A549 (cell line): ENCODE measurements at regions of chr19 and their contacts with region 1.

Region 1: GRCh38 chr19:8654591-8655339 is 24.3 kb downstream of the NFILZ start:
- DNase-seq: peak; percentile 59 to 69
- ATAC-seq: peak; percentile 68 to 86
- H3K4me3 ChIP-seq: no peak overlapping the region
- H3K27ac ChIP-seq: peak overlapping the region; percentile 73 to 83
- H3K4me1 ChIP-seq: 0 out of 3 replicates have a peak, but pooled peaks cover 3% of the 10 kb centered on the region
- CTCF ChIP-seq: peak; percentile 80
- EP300 ChIP-seq: no peak
- POLR2A ChIP-seq: no peak
- RAD21 ChIP-seq: peak; percentile 80 to 84

Region 2: DNA sequence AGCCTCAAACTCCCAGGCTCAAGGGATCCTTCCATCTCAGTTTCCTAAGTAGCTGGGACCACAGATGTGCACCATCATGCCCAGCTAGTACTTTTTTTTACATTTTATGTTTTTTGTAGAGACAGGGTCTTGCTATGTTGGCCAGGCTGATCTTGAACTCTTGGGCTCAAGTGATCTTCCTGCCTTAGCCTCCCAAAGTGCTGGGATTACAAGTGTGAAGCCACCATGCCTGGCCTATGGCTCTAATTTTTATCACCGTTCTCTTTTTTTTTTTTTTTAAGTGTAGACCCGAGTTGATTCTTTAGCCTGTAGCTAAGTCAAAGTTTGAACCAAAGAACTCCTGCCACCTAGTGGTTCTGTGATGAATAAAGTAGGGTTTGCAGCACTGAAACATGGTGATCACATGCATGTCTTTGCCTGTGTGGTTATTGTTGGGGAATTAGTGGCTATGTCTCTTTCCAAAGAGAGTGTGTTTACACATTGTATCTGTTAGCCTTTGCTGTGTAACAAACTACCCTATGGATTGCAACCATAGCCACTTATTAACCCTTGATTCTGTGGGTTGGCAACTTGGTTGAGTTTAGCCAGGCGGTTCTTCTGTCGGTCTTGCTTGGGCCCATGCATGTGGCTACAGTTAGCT is 12.7 kb before region 1 on chr19:
- CTCF ChIA-PET with region 1: interaction called, 10 read pairs
- POLR2A ChIA-PET with region 1: no interaction called
- DNase-seq: peak; percentile 38 to 68
- ATAC-seq: no peak
- H3K4me3 ChIP-seq: no peak overlapping the region
- H3K27ac ChIP-seq: peak overlapping the region; percentile 94 to 98
- H3K4me1 ChIP-seq: peaks cover 36% of the 10 kb centered on the region
- CTCF ChIP-seq: 0 out of 3 replicates have a peak, but pooled peaks have one; percentile 14
- EP300 ChIP-seq: no peak
- POLR2A ChIP-seq: no peak
- RAD21 ChIP-seq: peak in 1 of 2 experiments; percentile 58; a peak in 3 of 5 replicates

Region 3: GRCh38 chr19:8697671-8698432 is 43.1 kb after region 1 on chr19:
- CTCF ChIA-PET with region 1: interaction called, 26 read pairs
- POLR2A ChIA-PET with region 1: no interaction called
- DNase-seq: no peak
- ATAC-seq: no peak
- H3K4me3 ChIP-seq: no peak overlapping the region
- H3K27ac ChIP-seq: no peak overlapping the region
- H3K4me1 ChIP-seq: 0 out of 3 replicates have a peak, but pooled peaks cover 2% of the 10 kb centered on the region
- CTCF ChIP-seq: 0 out of 3 replicates have a peak, but pooled peaks have one; percentile 12
- EP300 ChIP-seq: no peak
- POLR2A ChIP-seq: no peak
- RAD21 ChIP-seq: 0 out of 5 replicates have a peak, but pooled peaks of 1 of the 2 experiments have one; percentile 16